Sciatic nerve (tissue), 2 donors: ENCODE measurements at regions of chr5 and their contacts with region 1.

Region 1: DNA sequence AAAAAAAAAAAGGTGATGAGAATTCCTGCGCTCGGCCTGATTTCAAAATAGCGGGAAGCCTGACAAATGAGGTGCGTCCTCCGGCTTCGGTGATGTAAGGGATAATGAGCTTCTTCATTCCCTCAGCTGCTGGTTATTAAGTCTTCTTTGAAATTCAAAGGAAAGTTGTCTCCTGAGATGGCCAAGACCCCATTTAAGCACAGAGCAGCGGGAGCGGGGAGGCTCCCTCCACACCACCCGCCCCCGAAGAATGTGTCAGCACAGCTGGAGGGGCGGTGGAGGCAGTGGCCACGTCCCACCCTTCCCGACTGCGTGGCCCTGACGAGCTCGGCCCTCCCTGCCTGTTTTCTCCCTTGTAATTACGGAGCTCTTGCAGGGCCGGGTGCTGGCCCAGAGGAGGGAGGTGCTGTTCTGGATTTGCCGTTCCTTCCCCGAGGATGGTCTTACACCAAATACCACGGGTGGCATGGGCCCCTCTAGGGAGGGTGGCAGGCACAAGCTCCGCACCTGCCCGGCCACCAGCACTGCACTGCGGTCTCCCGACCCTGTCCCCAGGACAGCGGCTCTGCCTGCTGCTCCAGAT is 31.0 kb downstream of the SLC9A3 start:
- DNase-seq: no peak
- ATAC-seq: peak; percentile 9

Region 2: GRCh38 chr5:399296-400281 is 93.6 kb before region 1 on chr5:
- intact Hi-C with region 1: no loop called
- DNase-seq: peak; percentile 89
- ATAC-seq: peak; percentile 96

Region 3: DNA sequence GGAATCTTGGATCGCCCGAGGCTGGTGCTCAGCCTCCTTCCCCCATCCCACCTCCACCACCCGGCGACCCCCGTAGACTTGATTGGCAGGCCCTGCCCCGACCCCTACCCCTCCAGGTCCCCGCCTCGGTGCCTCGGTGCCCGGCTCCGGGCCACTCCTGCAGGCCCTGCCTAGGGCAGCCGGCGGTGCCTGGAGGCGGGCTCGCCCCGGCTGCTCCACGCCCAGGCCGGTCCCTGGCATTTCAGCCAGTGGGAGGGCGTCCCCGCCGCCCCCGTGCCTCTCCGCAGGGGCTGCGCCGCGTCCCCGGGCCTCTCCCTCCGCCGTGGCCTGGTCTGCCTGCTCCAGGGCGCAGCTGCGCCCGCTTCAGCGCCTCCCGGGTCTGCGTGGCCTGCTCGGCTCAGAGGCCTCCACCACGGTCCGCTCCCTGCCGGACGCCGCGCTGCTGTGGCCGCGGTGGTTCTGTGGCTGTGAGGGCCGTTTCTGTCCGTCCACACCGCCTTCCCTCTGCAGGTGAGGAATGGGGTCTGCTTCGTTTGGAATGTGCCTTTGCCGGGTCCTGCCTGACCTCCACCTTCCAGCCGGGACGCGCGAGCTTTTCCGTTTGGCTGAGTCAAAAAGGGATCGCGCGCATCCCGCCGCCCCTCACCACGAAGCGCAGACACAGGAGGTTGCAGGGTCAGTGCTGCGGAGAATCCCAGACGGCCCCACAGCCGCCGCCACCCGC is 1437.8 kb after region 1 on chr5:
- intact Hi-C with region 1: loop called (anchors 5 kb)
- DNase-seq: no peak
- ATAC-seq: peak; percentile 77